B cell (primary cell): ENCODE measurements at regions of chr3 and their contacts with region 1.

Region 1: DNA sequence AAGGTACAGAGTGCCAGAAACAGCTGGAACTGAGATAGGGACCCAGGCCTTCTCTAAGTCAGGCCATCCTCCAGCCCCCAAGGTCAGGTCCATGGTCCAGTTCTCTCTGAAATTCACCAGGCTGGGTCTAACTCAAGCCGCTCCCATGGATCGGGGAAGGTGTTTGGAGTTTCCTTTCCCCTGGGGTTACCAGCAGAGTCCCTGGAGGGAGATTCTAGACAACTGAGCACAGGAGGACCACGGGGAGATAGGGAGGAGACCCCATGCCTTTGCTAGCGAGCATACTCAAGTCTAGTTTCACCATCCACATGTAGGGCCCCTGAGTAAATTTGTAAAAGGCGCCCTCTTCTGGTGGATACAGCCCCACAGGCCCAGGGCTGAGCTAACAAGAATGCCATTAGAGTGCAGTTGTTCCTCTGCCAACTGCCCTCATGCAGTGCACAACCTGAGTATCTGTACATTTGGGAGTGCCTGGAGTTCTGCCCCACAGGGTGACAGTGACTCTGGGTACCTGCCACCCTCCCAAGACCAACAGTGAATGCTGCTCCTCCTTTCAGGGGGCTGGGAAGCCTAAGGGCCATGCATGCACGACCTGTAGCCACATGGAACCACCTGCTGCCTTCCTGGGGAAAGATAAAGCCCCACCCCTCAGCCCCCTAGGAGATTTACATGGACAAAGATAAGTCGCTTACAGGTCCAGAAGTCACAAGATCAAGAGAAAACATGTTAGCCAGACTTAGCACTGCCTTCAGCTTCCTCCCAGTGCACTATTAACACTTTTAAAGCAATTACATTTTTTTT is 89.0 kb downstream of the IQSEC1 start:
- DNase-seq: peak; percentile 79
- ATAC-seq: peak; percentile 66
- H3K4me3 ChIP-seq: no peak overlapping the region
- H3K4me3 Mint-ChIP-seq: no peak overlapping the region
- H3K27ac ChIP-seq: peak overlapping the region in 1 of 2 donors; percentile 63
- H3K27ac Mint-ChIP-seq: peak overlapping the region; percentile 73
- H3K4me1 ChIP-seq: peaks cover 54 to 69% of the 10 kb centered on the region in 2 donors
- H3K4me1 Mint-ChIP-seq: peaks cover 69% of the 10 kb centered on the region
- H3K27me3 ChIP-seq: no peaks in the 10 kb centered on the region
- H3K27me3 Mint-ChIP-seq: no peaks in the 10 kb centered on the region
- CTCF ChIP-seq: peak; percentile 74

Region 2: GRCh38 chr3:12901623-12902045 is 82.6 kb before region 1 on chr3:
- CTCF ChIA-PET with region 1: interaction called, 18 read pairs
- POLR2A ChIA-PET with region 1: interaction called, 3 read pairs
- intact Hi-C with region 1: loop called (anchors 1 kb)
- DNase-seq: peak; percentile 45
- ATAC-seq: peak; percentile 86
- H3K4me3 ChIP-seq: no peak overlapping the region
- H3K4me3 Mint-ChIP-seq: peak overlapping the region; percentile 16
- H3K27ac ChIP-seq: peak overlapping the region in 1 of 2 donors; percentile 50
- H3K27ac Mint-ChIP-seq: peak overlapping the region; percentile 83
- H3K4me1 ChIP-seq: peaks cover 23 to 39% of the 10 kb centered on the region in 2 donors
- H3K4me1 Mint-ChIP-seq: peaks cover 30% of the 10 kb centered on the region
- H3K27me3 ChIP-seq: no peaks in the 10 kb centered on the region
- H3K27me3 Mint-ChIP-seq: no peaks in the 10 kb centered on the region
- CTCF ChIP-seq: no peak

Region 3: GRCh38 chr3:12954891-12955650 is 29.2 kb before region 1 on chr3:
- CTCF ChIA-PET with region 1: interaction called, 31 read pairs
- POLR2A ChIA-PET with region 1: no interaction called
- intact Hi-C with region 1: no loop called
- DNase-seq: peak; percentile 87
- ATAC-seq: peak; percentile 96
- H3K4me3 ChIP-seq: peak overlapping the region in 3 of 5 experiments; percentile 20 to 40 (median 32)
- H3K4me3 Mint-ChIP-seq: peak overlapping the region; percentile 74
- H3K27ac ChIP-seq: peak overlapping the region; percentile 70 to 81
- H3K27ac Mint-ChIP-seq: peak overlapping the region; percentile 94
- H3K4me1 ChIP-seq: peaks cover 60 to 90% of the 10 kb centered on the region in 2 donors
- H3K4me1 Mint-ChIP-seq: peaks cover 80% of the 10 kb centered on the region
- H3K27me3 ChIP-seq: no peaks in the 10 kb centered on the region
- H3K27me3 Mint-ChIP-seq: no peaks in the 10 kb centered on the region
- CTCF ChIP-seq: peak; percentile 35

Region 4: GRCh38 chr3:12994607-12995388 is 10.6 kb after region 1 on chr3:
- CTCF ChIA-PET with region 1: interaction called, 69 read pairs
- POLR2A ChIA-PET with region 1: interaction called, 5 read pairs
- intact Hi-C with region 1: no loop called
- DNase-seq: peak; percentile 90
- ATAC-seq: peak; percentile 75
- H3K4me3 ChIP-seq: peak overlapping the region; percentile 30 to 91 (median 72)
- H3K4me3 Mint-ChIP-seq: peak overlapping the region; percentile 95
- H3K27ac ChIP-seq: peak overlapping the region; percentile 74 to 88
- H3K27ac Mint-ChIP-seq: peak overlapping the region; percentile 92
- H3K4me1 ChIP-seq: peaks cover 58 to 83% of the 10 kb centered on the region in 2 donors
- H3K4me1 Mint-ChIP-seq: peaks cover 81% of the 10 kb centered on the region
- H3K27me3 ChIP-seq: no peaks in the 10 kb centered on the region
- H3K27me3 Mint-ChIP-seq: no peaks in the 10 kb centered on the region
- CTCF ChIP-seq: peak; percentile 91

Region 5: DNA sequence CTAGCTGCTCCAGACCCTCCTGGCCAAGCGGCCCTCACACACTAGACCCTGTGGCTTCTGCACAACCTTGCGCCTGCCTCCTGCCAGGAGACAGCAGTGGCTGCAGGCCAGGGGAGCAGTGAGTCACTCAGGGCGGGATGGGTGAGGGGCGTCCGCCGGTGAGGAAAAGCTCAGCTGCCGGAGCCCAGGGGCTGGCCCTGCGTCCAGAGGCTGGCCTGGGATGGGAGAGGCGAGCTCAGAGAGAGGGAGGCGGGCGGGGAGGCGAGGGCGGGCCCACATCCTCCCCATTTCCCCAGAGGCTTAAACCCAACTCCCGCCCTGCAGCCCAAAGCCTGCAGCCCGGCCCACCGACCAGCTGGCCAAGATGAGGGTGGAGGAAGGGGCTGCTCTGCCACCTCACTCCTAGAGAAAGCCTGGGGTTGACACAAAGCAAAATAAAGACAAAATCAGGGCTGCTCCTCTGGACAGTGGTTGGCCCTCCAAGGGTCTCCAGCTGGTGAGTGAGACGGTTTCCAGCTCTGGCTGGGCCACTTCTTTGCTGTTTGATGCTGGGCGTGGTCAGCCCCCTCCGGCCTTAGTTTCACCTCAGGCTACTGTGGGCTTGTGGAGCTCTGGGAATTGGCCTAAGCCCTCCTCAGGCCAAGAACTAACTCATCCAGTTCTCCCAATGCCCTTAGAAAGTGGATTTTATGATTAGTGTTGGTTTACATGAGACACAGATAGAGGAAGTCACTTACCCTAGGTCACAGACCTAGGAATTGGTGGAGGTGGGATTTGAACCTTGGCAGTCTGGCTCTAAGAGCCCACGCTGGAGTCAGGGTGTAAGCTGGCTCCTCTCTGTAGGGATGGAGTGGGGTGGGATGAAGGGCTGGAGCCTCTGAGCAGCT is 38.4 kb after region 1 on chr3:
- CTCF ChIA-PET with region 1: interaction called, 17 read pairs
- POLR2A ChIA-PET with region 1: interaction called, 5 read pairs
- intact Hi-C with region 1: no loop called
- DNase-seq: peak; percentile 72
- ATAC-seq: peak; percentile 62
- H3K4me3 ChIP-seq: peak overlapping the region; percentile 81 to 98 (median 88)
- H3K4me3 Mint-ChIP-seq: peak overlapping the region; percentile 100
- H3K27ac ChIP-seq: peak overlapping the region; percentile 96 to 97
- H3K27ac Mint-ChIP-seq: peak overlapping the region; percentile 95
- H3K4me1 ChIP-seq: peaks cover 45 to 55% of the 10 kb centered on the region in 2 donors
- H3K4me1 Mint-ChIP-seq: peaks cover 78% of the 10 kb centered on the region
- H3K27me3 ChIP-seq: no peaks in the 10 kb centered on the region
- H3K27me3 Mint-ChIP-seq: no peaks in the 10 kb centered on the region
- CTCF ChIP-seq: no peak